SK-N-SH (cell line): ENCODE measurements at regions of chr4 and their contacts with region 1.

Region 1: GRCh38 chr4:123102897-123103471 is 180.6 kb upstream of the NUDT6 start:
- DNase-seq: peak; percentile 55
- H3K4me3 ChIP-seq: no peak overlapping the region; a peak in 1 of 4 replicates
- H3K27ac ChIP-seq: no peak overlapping the region
- H3K4me1 ChIP-seq: no peaks in the 10 kb centered on the region; a peak in 1 of 4 replicates
- H3K27me3 ChIP-seq: no peaks in the 10 kb centered on the region
- CTCF ChIP-seq: peak; percentile 77
- EP300 ChIP-seq: no peak
- RAD21 ChIP-seq: peak; percentile 83

Region 2: GRCh38 chr4:123114915-123115756 is 12.2 kb after region 1 on chr4:
- CTCF ChIA-PET with region 1: interaction called, 10 read pairs
- POLR2A ChIA-PET with region 1: no interaction called
- DNase-seq: peak; percentile 23
- H3K4me3 ChIP-seq: no peak overlapping the region
- H3K27ac ChIP-seq: no peak overlapping the region
- H3K4me1 ChIP-seq: peaks cover 0 to 2% of the 10 kb centered on the region in 2 experiments; a peak in 2 of 4 replicates
- H3K27me3 ChIP-seq: no peaks in the 10 kb centered on the region
- CTCF ChIP-seq: no peak
- EP300 ChIP-seq: no peak
- RAD21 ChIP-seq: no peak